Naive thymus-derived CD4-positive, alpha-beta T cell (primary cell): ENCODE measurements at regions of chr6 and their contacts with region 1.

Region 1: DNA sequence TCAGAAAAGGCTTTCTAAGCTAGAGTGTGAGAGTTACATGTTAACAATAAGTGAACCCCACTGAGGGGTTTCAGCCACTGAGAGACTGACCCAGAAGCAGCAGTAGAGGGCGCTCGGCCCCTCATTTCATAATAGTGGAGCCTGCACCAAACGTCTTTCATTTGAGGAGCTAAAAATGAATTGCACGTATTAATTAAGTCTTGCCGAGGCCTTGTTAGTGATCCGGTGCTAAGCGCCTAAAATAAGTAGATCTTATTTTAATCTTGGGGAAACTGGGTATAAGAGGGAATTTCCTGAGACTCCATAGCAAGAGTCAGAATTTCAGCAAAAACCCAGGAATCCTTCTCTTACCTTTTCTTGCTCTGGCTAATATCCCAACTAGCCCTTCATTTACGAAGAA is 209.7 kb downstream of the FARS2 start:
- DNase-seq: peak; percentile 33 to 74 (median 56)
- ATAC-seq: peak; percentile 81
- H3K4me3 ChIP-seq: no peak overlapping the region
- H3K4me3 Mint-ChIP-seq: no peak overlapping the region
- H3K27ac ChIP-seq: no peak overlapping the region
- H3K27ac Mint-ChIP-seq: no peak overlapping the region
- H3K4me1 ChIP-seq: no peaks in the 10 kb centered on the region
- H3K4me1 Mint-ChIP-seq: peaks cover 0 to 14% (median 10%) of the 10 kb centered on the region in 7 donors
- H3K27me3 ChIP-seq: no peaks in the 10 kb centered on the region
- H3K27me3 Mint-ChIP-seq: no peaks in the 10 kb centered on the region

Region 2: GRCh38 chr6:5584078-5584482 is 113.0 kb after region 1 on chr6:
- CTCF ChIA-PET with region 1: interaction called, 4 read pairs
- POLR2A ChIA-PET with region 1: no interaction called
- intact Hi-C with region 1: loop called in 1 of 2 experiments (anchors 2 kb)
- DNase-seq: no peak
- ATAC-seq: no peak
- H3K4me3 ChIP-seq: no peak overlapping the region
- H3K4me3 Mint-ChIP-seq: peak overlapping the region in 1 of 10 donors; percentile 45
- H3K27ac ChIP-seq: no peak overlapping the region
- H3K27ac Mint-ChIP-seq: no peak overlapping the region
- H3K4me1 ChIP-seq: peaks cover 0 to 12% of the 10 kb centered on the region in 2 donors
- H3K4me1 Mint-ChIP-seq: peaks cover 9 to 25% (median 19%) of the 10 kb centered on the region in 7 donors
- H3K27me3 ChIP-seq: no peaks in the 10 kb centered on the region
- H3K27me3 Mint-ChIP-seq: no peaks in the 10 kb centered on the region

Region 3: DNA sequence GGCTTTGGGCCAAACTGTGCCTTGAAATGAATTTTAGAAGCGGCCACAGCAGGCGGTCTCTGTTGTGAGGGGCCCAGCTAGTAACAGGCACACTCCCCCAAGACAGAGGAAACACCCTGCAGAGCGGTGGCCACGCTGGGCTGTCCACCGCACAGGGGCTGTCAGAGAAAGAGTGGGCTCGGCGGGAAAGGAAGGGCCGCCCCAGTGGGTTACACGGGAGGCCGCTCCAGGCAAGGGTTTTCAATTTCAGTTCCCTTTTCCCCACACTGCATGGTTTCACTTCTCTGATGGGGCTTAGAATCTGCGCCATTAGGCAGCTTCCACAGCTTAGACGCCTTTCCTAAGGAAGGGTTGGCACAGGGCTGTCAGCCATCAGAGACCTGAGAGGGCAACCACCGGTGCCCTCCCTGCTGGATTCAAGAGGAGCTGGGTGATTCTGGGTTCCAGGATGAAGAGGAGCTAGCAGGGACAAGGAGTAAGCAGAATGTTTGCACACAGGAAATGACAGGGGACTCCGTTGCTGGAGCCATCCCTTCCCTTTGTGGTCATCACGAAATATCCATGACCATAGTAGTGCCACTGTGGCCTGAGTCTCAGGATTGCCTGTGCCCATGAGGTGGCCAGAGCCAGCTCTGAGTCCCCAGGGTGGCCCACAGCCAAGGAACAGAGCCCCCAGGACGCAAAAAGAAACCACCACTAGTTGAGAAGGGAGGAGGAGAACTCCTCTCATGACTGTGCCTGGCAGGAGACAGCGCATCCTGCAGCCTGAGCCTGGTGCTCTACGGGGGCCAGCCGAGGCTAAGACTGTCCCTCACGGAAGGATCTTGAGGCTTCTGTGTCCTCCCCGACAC is 253.0 kb after region 1 on chr6:
- CTCF ChIA-PET with region 1: no interaction called
- POLR2A ChIA-PET with region 1: no interaction called
- intact Hi-C with region 1: loop called in 1 of 2 experiments (anchors 5 kb)
- DNase-seq: peak in 3 of 9 donors; percentile 4 to 20 (median 9)
- ATAC-seq: peak; percentile 83
- H3K4me3 ChIP-seq: peak overlapping the region; percentile 23
- H3K4me3 Mint-ChIP-seq: peak overlapping the region in 9 of 10 donors; percentile 9 to 86 (median 77)
- H3K27ac ChIP-seq: peak overlapping the region; percentile 10
- H3K27ac Mint-ChIP-seq: peak overlapping the region in 8 of 9 donors; percentile 71 to 93 (median 81)
- H3K4me1 ChIP-seq: no peaks in the 10 kb centered on the region
- H3K4me1 Mint-ChIP-seq: peaks cover 20 to 37% (median 27%) of the 10 kb centered on the region in 7 donors
- H3K27me3 ChIP-seq: no peaks in the 10 kb centered on the region
- H3K27me3 Mint-ChIP-seq: no peaks in the 10 kb centered on the region

Region 4: DNA sequence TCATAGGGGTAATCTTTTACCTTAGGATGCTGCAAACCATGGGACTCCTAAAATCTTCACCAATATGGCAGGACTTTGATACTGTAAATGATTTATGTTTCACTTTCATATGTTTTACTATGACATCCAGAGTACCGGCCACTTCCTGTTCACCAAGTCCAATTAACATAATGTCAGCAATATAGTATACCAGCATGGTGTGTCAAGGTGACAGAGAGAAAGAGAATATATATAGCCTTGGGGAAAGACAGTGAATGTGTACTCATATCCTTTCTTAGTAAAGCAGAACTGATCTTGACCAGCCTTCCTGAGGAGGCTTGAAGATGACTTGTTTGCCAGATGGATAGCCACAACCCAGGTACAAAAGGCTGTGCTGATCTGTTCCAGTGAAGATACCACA is 407.7 kb after region 1 on chr6:
- CTCF ChIA-PET with region 1: no interaction called
- POLR2A ChIA-PET with region 1: no interaction called
- intact Hi-C with region 1: loop called in 1 of 2 experiments (anchors 1 kb)
- DNase-seq: peak in 1 of 9 donors; percentile 13
- ATAC-seq: no peak
- H3K4me3 ChIP-seq: no peak overlapping the region
- H3K4me3 Mint-ChIP-seq: no peak overlapping the region
- H3K27ac ChIP-seq: no peak overlapping the region
- H3K27ac Mint-ChIP-seq: peak overlapping the region in 1 of 9 donors; percentile 15
- H3K4me1 ChIP-seq: peaks cover 0 to 5% of the 10 kb centered on the region in 2 donors
- H3K4me1 Mint-ChIP-seq: peaks cover 5 to 26% (median 9%) of the 10 kb centered on the region in 7 donors
- H3K27me3 ChIP-seq: no peaks in the 10 kb centered on the region
- H3K27me3 Mint-ChIP-seq: peaks cover 0 to 24% (median 0%) of the 10 kb centered on the region in 5 donors

Region 5: DNA sequence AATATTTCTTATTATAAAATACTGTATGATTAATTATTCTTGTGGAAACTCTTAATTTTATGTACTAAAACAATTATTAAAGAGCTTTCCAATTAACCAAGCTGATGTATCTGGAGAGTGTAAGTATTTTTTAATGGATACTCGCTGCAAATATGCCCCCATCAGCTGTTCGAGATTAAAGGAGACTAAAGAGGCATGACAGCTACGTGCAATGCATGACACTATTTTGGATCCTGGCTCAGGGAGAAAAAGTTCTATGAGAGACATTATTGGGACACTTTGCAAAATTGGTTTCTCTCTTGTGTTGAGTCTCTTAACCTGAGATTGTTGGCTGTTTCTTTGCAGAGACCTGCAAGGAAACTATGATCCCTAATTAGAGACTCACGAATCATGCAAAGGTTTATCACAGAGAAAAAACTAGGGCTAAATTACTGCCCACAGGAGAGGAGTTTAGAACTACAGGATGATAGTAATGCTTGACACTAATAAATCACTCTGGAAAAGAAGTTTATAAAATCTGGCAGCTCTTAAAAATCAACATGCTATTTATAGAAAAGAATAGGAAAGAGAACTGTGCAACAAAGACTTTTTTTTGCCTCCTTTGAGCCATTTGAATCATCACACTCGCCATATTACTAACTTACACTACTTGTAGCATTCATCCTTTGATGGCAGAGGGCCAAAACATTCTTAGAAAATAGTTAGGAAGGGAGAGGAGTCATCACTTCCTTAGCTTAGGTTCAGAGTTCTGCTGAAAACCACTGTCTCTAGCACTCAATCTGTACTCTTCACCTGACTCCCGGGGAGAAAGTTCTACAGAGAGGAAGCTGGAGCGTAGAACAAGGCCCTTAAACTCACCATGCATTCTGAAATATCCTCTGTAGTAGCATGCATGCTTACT is 510.3 kb after region 1 on chr6:
- CTCF ChIA-PET with region 1: no interaction called
- POLR2A ChIA-PET with region 1: no interaction called
- intact Hi-C with region 1: no loop called
- DNase-seq: no peak
- ATAC-seq: no peak
- H3K4me3 ChIP-seq: no peak overlapping the region
- H3K4me3 Mint-ChIP-seq: peak overlapping the region in 1 of 10 donors; percentile 16
- H3K27ac ChIP-seq: no peak overlapping the region
- H3K27ac Mint-ChIP-seq: peak overlapping the region in 1 of 9 donors; percentile 19
- H3K4me1 ChIP-seq: peaks cover 0 to 20% of the 10 kb centered on the region in 2 donors
- H3K4me1 Mint-ChIP-seq: peaks cover 6 to 47% (median 18%) of the 10 kb centered on the region in 7 donors
- H3K27me3 ChIP-seq: no peaks in the 10 kb centered on the region
- H3K27me3 Mint-ChIP-seq: peaks cover 0 to 17% (median 0%) of the 10 kb centered on the region in 5 donors

Region 6: GRCh38 chr6:6008648-6009421 is 537.8 kb after region 1 on chr6:
- CTCF ChIA-PET with region 1: interaction called, 3 read pairs
- POLR2A ChIA-PET with region 1: no interaction called
- intact Hi-C with region 1: loop called in 1 of 2 experiments (anchors 5 kb)
- DNase-seq: peak in 3 of 9 donors; percentile 18 to 71 (median 23)
- ATAC-seq: peak; percentile 66
- H3K4me3 ChIP-seq: peak overlapping the region; percentile 36
- H3K4me3 Mint-ChIP-seq: peak overlapping the region; percentile 32 to 87 (median 80)
- H3K27ac ChIP-seq: no peak overlapping the region
- H3K27ac Mint-ChIP-seq: no peak overlapping the region
- H3K4me1 ChIP-seq: peaks cover 20 to 36% of the 10 kb centered on the region in 2 donors
- H3K4me1 Mint-ChIP-seq: peaks cover 27 to 52% (median 44%) of the 10 kb centered on the region in 7 donors
- H3K27me3 ChIP-seq: peaks cover 43 to 45% of the 10 kb centered on the region in 2 donors
- H3K27me3 Mint-ChIP-seq: peaks cover 68 to 82% (median 70%) of the 10 kb centered on the region in 5 donors

Region 7: GRCh38 chr6:6085928-6086668 is 615.1 kb after region 1 on chr6:
- CTCF ChIA-PET with region 1: no interaction called
- POLR2A ChIA-PET with region 1: no interaction called
- intact Hi-C with region 1: no loop called
- DNase-seq: no peak
- ATAC-seq: no peak
- H3K4me3 ChIP-seq: no peak overlapping the region
- H3K4me3 Mint-ChIP-seq: no peak overlapping the region
- H3K27ac ChIP-seq: no peak overlapping the region
- H3K27ac Mint-ChIP-seq: no peak overlapping the region
- H3K4me1 ChIP-seq: no peaks in the 10 kb centered on the region
- H3K4me1 Mint-ChIP-seq: peaks cover 0 to 1% (median 0%) of the 10 kb centered on the region in 7 donors
- H3K27me3 ChIP-seq: no peaks in the 10 kb centered on the region
- H3K27me3 Mint-ChIP-seq: peaks cover 3 to 20% (median 8%) of the 10 kb centered on the region in 5 donors

Region 8: DNA sequence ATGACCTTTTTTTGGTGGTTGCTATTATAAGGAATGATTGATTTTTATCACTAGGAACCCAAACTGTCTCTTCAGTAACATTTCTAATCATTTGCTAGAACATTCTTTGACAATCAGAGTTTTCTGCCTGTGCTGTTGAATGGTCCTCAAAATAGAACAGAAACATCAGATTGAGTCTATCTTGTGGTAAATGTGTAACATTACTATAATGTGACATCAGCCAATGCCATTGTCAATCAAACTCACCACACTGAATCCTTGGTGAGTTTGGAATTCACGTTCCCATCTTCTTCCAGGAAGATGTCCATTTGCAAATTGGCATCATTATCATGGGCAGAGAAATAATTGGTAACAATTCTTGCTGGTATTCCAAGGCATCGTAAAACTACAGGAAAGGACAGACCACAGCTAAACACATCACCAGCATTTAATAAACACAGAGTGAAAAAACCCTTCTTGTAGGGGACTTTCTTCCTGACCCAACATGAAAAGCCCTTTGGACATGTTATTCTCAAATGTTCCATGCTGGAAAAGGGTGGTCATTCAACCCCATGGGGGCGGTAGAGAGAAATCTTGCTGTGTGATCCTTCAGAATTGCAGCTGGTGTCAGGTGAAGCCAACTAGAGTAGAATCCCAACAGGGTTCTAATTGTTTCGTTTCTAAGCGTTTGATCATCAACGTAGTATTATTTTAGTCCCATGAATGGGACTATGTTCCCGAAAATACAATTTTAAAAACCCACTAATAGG is 750.9 kb after region 1 on chr6:
- CTCF ChIA-PET with region 1: no interaction called
- POLR2A ChIA-PET with region 1: no interaction called
- intact Hi-C with region 1: loop called in 1 of 2 experiments (anchors 5 kb)
- DNase-seq: no peak
- ATAC-seq: no peak
- H3K4me3 ChIP-seq: no peak overlapping the region
- H3K4me3 Mint-ChIP-seq: no peak overlapping the region
- H3K27ac ChIP-seq: no peak overlapping the region
- H3K27ac Mint-ChIP-seq: no peak overlapping the region
- H3K4me1 ChIP-seq: no peaks in the 10 kb centered on the region
- H3K4me1 Mint-ChIP-seq: no peaks in the 10 kb centered on the region
- H3K27me3 ChIP-seq: no peaks in the 10 kb centered on the region
- H3K27me3 Mint-ChIP-seq: peaks cover 2 to 51% (median 45%) of the 10 kb centered on the region in 5 donors